Panc1 (cell line): ENCODE measurements at regions of chr5 and their contacts with region 1.

Region 1: GRCh38 chr5:62779010-62779422 is 200.4 kb downstream of the LRRC70 start:
- DNase-seq: peak; percentile 32
- ATAC-seq: peak; percentile 87
- H3K4me3 ChIP-seq: no peak overlapping the region
- H3K27ac ChIP-seq: no peak overlapping the region
- H3K4me1 ChIP-seq: no peaks in the 10 kb centered on the region
- H3K27me3 ChIP-seq: no peaks in the 10 kb centered on the region
- CTCF ChIP-seq: peak; percentile 84

Region 2: DNA sequence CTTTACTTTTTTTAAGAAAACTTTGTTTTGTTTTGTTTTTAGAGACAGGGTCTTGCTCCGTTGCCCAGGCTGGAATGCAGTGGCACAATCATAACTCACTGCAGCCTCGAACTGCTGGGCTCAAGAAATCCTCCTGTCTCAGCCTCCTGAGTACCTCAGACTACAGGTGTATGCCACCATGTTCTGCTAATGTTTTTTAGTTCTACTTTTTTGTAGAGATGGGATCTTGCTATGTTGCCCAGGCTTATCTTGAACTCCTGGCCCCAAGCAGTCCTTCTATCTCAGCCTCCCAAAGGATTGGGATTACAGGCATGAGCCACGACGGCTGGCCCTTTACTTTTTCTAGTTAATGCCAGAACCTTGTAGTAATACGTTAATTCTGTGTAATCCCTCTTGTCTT is 330.5 kb before region 1 on chr5:
- CTCF ChIA-PET with region 1: no interaction called
- POLR2A ChIA-PET with region 1: no interaction called
- in situ Hi-C with region 1: no loop called
- intact Hi-C with region 1: loop called (anchors 5 kb)
- DNase-seq: no peak
- ATAC-seq: no peak
- H3K4me3 ChIP-seq: no peak overlapping the region
- H3K27ac ChIP-seq: no peak overlapping the region
- H3K4me1 ChIP-seq: no peaks in the 10 kb centered on the region
- H3K27me3 ChIP-seq: no peaks in the 10 kb centered on the region
- CTCF ChIP-seq: no peak

Region 3: GRCh38 chr5:62460578-62460983 is 318.4 kb before region 1 on chr5:
- CTCF ChIA-PET with region 1: no interaction called
- POLR2A ChIA-PET with region 1: no interaction called
- in situ Hi-C with region 1: no loop called
- intact Hi-C with region 1: loop called (anchors 2 kb)
- DNase-seq: peak; percentile 22
- ATAC-seq: peak; percentile 75; the same call in 1 of the 2 replicates
- H3K4me3 ChIP-seq: no peak overlapping the region
- H3K27ac ChIP-seq: no peak overlapping the region
- H3K4me1 ChIP-seq: no peaks in the 10 kb centered on the region
- H3K27me3 ChIP-seq: no peaks in the 10 kb centered on the region
- CTCF ChIP-seq: peak; percentile 80; the same call in 1 of the 2 replicates

Region 4: GRCh38 chr5:62708481-62709325 is 70.3 kb before region 1 on chr5:
- CTCF ChIA-PET with region 1: no interaction called
- POLR2A ChIA-PET with region 1: no interaction called
- in situ Hi-C with region 1: no loop called
- intact Hi-C with region 1: no loop called
- DNase-seq: no peak
- ATAC-seq: no peak
- H3K4me3 ChIP-seq: no peak overlapping the region
- H3K27ac ChIP-seq: no peak overlapping the region
- H3K4me1 ChIP-seq: no peaks in the 10 kb centered on the region
- H3K27me3 ChIP-seq: no peaks in the 10 kb centered on the region
- CTCF ChIP-seq: no peak

Region 5: GRCh38 chr5:63555874-63556273 is 776.9 kb after region 1 on chr5:
- CTCF ChIA-PET with region 1: no interaction called
- POLR2A ChIA-PET with region 1: no interaction called
- in situ Hi-C with region 1: no loop called
- intact Hi-C with region 1: no loop called
- DNase-seq: no peak
- ATAC-seq: 0 out of 2 replicates have a peak, but pooled peaks have one; percentile 51
- H3K4me3 ChIP-seq: no peak overlapping the region
- H3K27ac ChIP-seq: no peak overlapping the region
- H3K4me1 ChIP-seq: no peaks in the 10 kb centered on the region
- H3K27me3 ChIP-seq: no peaks in the 10 kb centered on the region
- CTCF ChIP-seq: no peak